PC-3 (cell line): ENCODE measurements at regions of chr10 and their contacts with region 1.

Region 1: GRCh38 chr10:32687116-32687515 is 241.2 kb downstream of the CCDC7 start:
- DNase-seq: peak; percentile 53
- ATAC-seq: no peak
- H3K4me3 ChIP-seq: no peak overlapping the region
- H3K27ac ChIP-seq: no peak overlapping the region
- H3K4me1 ChIP-seq: peaks cover 26% of the 10 kb centered on the region
- H3K27me3 ChIP-seq: no peaks in the 10 kb centered on the region
- CTCF ChIP-seq: no peak

Region 2: DNA sequence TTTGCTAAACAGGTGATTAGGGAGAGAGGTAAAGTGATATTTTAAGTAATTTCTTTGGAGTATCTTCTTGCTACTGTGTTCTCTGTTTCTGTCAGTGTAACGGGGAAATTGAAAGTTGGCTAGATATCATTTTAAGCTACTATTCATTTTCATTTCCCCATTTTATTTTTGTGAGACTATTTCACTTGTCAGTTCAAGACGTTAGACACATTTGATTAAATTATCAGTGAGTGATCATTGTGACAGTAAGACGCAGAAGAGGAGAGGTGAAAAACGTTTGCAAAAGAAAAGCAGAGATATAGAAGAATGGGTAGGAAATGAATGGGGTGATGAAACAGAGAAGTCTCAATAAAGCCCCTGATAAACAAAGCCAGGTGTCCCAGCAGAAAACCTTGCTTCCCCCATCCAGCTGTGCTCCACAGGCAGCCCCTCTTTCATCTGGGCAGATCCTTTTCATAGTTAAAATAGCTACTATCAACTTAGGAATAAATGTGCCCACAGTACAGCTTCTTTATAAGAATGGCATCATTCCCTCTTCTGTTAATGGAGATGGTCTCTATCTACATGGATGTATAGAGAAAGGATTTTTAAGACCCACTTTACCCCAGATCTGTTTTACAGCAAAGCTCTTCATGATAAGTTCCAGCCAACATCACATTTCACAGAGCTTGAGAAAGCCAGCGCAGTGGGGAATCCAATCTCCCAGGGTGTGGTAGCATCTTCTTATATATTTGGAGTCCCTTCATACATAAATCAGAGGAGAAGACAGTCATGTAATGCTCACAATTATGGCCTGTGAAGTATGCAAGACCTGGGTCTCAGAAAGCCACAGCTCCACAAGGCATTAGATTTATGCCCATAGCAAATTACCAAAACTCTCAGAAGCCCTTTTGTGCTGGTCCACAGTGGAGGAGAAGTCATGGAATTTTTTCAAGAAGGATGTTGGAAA is 409.0 kb after region 1 on chr10:
- CTCF ChIA-PET with region 1: no interaction called
- POLR2A ChIA-PET with region 1: interaction called, 10 read pairs
- intact Hi-C with region 1: no loop called
- DNase-seq: no peak
- ATAC-seq: no peak
- H3K4me3 ChIP-seq: no peak overlapping the region
- H3K27ac ChIP-seq: no peak overlapping the region
- H3K4me1 ChIP-seq: no peaks in the 10 kb centered on the region
- H3K27me3 ChIP-seq: no peaks in the 10 kb centered on the region
- CTCF ChIP-seq: no peak

Region 3: DNA sequence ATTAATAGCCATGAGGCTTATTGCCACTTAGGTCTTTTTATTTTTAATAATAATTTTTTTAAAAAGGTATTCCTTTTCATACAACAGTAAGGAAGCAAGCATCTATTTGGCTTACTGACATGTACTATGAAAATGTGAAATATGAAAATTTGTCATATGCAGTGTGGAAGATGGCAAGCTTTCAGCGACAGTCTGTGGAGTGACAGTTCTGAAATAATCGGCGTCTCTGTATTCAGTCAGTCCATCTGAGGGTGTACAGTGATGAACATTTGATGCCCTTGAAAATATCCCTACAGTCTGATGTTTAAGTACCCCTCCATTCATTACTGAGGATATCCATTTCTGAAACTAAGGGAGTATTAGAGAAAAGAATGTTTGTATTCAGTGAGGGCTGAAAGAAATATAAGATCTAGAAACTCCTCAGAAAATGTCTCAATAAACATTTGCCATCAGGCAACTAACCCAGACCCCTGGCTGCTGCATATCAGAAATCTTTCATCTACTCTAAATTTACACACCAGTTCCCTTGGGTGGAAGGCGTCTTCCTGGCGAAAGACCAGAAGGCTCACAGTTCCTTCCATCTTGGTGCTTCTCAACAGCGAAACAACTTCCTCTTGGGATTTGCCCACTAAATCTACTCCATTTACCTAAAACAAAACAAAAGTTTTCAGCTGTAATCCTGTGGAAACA is 1687.4 kb after region 1 on chr10:
- CTCF ChIA-PET with region 1: no interaction called
- POLR2A ChIA-PET with region 1: interaction called, 28 read pairs
- intact Hi-C with region 1: no loop called
- DNase-seq: no peak
- ATAC-seq: no peak
- H3K4me3 ChIP-seq: no peak overlapping the region
- H3K27ac ChIP-seq: no peak overlapping the region
- H3K4me1 ChIP-seq: no peaks in the 10 kb centered on the region
- H3K27me3 ChIP-seq: no peaks in the 10 kb centered on the region
- CTCF ChIP-seq: no peak